IMR-90 (cell line): ENCODE measurements at regions of chr10 and their contacts with region 1.

Region 1: GRCh38 chr10:102641880-102642735 is 2.2 kb upstream of the TRIM8 start:
- DNase-seq: peak; percentile 97
- ATAC-seq: peak; percentile 71
- H3K4me3 ChIP-seq: peak overlapping the region; percentile 77
- H3K27ac ChIP-seq: peak overlapping the region; percentile 95
- H3K4me1 ChIP-seq: peaks cover 2% of the 10 kb centered on the region; the same call in 1 of the 2 replicates
- H3K27me3 ChIP-seq: no peaks in the 10 kb centered on the region
- CTCF ChIP-seq: 0 out of 2 replicates have a peak, but pooled peaks have one; percentile 0
- POLR2A ChIP-seq: peak; percentile 62; the same call in 1 of the 2 replicates
- RAD21 ChIP-seq: no peak

Region 2: GRCh38 chr10:102476466-102477141 is 165.5 kb before region 1 on chr10:
- CTCF ChIA-PET with region 1: no interaction called
- POLR2A ChIA-PET with region 1: no interaction called
- dilution Hi-C with region 1: no loop called
- in situ Hi-C with region 1: no loop called
- intact Hi-C with region 1: no loop called
- DNase-seq: no peak
- ATAC-seq: no peak; the same call in 1 of the 2 replicates
- H3K4me3 ChIP-seq: no peak overlapping the region
- H3K27ac ChIP-seq: no peak overlapping the region
- H3K4me1 ChIP-seq: no peaks in the 10 kb centered on the region
- H3K27me3 ChIP-seq: no peaks in the 10 kb centered on the region
- CTCF ChIP-seq: no peak
- POLR2A ChIP-seq: no peak
- RAD21 ChIP-seq: no peak

Region 3: DNA sequence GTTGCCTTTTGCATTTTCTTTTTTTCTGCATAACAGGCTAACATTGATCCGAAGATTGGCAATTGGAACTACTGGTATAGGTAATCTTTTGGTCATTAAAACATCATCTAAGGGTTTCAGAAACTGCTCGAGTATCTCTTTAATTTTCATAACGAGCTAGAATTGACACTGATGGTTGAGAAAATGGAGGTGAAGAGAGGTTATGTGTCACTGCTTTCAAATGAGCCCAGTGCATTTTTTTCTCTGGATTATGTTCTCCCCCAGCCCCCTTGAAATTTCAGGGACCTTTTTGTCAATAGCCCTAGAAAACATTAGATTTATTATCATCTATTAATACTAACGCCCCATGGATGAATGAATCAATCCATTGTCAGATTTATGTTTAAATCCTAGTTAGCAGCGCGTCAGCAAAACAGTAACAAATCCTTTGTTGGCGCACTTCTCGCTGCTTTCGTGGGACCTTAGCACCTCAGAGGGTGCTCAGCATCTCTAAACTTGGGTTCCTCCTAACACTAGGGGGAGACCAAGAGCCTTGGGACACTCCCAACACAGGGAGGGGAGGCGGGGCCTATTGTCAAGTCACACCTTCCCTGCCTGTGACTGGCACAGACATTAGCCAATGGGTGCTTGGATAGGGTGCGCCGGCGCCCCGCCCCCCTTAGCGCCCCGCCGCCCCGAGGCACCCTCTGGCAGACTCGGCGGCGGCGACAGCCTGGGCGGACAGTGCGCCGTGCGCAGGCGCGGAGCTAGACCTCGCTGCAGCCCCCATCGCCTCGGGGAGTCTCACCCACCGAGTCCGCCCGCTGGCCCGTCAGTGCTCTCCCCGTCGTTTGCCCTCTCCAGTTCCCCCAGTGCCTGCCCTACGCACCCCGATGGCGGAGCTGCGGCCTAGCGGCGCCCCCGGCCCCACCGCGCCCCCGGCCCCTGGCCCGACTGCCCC is 138.6 kb before region 1 on chr10 and contains the start of gene SUFU:
- CTCF ChIA-PET with region 1: no interaction called
- POLR2A ChIA-PET with region 1: no interaction called
- dilution Hi-C with region 1: no loop called
- in situ Hi-C with region 1: no loop called
- intact Hi-C with region 1: loop called (anchors 1 kb)
- DNase-seq: peak; percentile 99
- ATAC-seq: peak; percentile 73
- H3K4me3 ChIP-seq: peak within 1 kb of the TSS; percentile 96
- H3K27ac ChIP-seq: peak within 1 kb of the TSS; percentile 83
- H3K4me1 ChIP-seq: peaks cover 3% of the 10 kb centered on the region
- H3K27me3 ChIP-seq: no peaks in the 10 kb centered on the region
- CTCF ChIP-seq: peak; percentile 96
- POLR2A ChIP-seq: peak; percentile 67
- RAD21 ChIP-seq: peak; percentile 90
- total RNA-seq, gene SUFU: 2.2 TPM in 2 replicates

Region 4: GRCh38 chr10:102629661-102630614 is 12.2 kb before region 1 on chr10:
- CTCF ChIA-PET with region 1: interaction called, 3 read pairs
- POLR2A ChIA-PET with region 1: interaction called, 4 read pairs
- dilution Hi-C with region 1: no loop called
- in situ Hi-C with region 1: no loop called
- intact Hi-C with region 1: loop called (anchors 1 kb)
- DNase-seq: peak; percentile 91
- ATAC-seq: peak; percentile 75
- H3K4me3 ChIP-seq: no peak overlapping the region
- H3K27ac ChIP-seq: peak overlapping the region; percentile 98
- H3K4me1 ChIP-seq: peaks cover 77% of the 10 kb centered on the region
- H3K27me3 ChIP-seq: no peaks in the 10 kb centered on the region
- CTCF ChIP-seq: no peak
- POLR2A ChIP-seq: no peak
- RAD21 ChIP-seq: no peak

Region 5: GRCh38 chr10:102678842-102679289 is 36.8 kb after region 1 on chr10:
- CTCF ChIA-PET with region 1: no interaction called
- POLR2A ChIA-PET with region 1: interaction called, 14 read pairs
- dilution Hi-C with region 1: no loop called
- in situ Hi-C with region 1: no loop called
- intact Hi-C with region 1: loop called (anchors 2 kb)
- DNase-seq: peak; percentile 52
- ATAC-seq: peak; percentile 40
- H3K4me3 ChIP-seq: no peak overlapping the region
- H3K27ac ChIP-seq: peak overlapping the region; percentile 15
- H3K4me1 ChIP-seq: peaks cover 44% of the 10 kb centered on the region
- H3K27me3 ChIP-seq: no peaks in the 10 kb centered on the region
- CTCF ChIP-seq: peak; percentile 76
- POLR2A ChIP-seq: no peak
- RAD21 ChIP-seq: peak; percentile 70